Pancreas (tissue), 10 donors: ENCODE measurements at regions of chr2 and their contacts with region 1.

Region 1: GRCh38 chr2:180125245-180125962 is 118.3 kb upstream of the CWC22 start:
- DNase-seq: peak in 4 of 6 donors; percentile 22 to 50 (median 31)
- ATAC-seq: peak; percentile 87 to 96 (median 93)
- H3K4me3 ChIP-seq: no peak overlapping the region
- H3K27ac ChIP-seq: no peak overlapping the region
- H3K4me1 ChIP-seq: no peaks in the 10 kb centered on the region
- H3K27me3 ChIP-seq: no peaks in the 10 kb centered on the region
- CTCF ChIP-seq: peak in 2 of 4 donors; percentile 34 to 41

Region 2: DNA sequence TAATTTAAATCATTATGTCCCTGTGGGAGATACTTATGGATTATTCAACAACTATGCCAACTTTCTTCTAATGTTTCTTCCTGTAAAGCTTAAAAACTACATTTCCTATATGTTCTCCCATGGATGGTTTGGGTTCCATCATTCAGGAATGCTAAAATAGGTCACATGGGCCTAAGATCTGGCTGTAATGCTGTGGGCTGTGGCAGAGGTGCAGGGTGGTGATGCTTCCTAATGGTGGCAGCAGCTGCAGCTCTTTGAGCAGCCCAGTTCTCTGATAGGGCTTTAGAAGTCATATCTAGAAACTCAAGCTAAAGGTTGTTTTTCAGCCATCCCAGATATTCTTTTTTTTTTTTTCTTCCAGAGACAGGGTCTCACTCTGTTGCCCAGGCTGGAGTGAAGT is 530.1 kb before region 1 on chr2:
- intact Hi-C with region 1: no loop called
- DNase-seq: no peak
- ATAC-seq: peak in 1 of 4 donors; percentile 21
- H3K4me3 ChIP-seq: no peak overlapping the region
- H3K27ac ChIP-seq: no peak overlapping the region
- H3K4me1 ChIP-seq: no peaks in the 10 kb centered on the region
- H3K27me3 ChIP-seq: no peaks in the 10 kb centered on the region
- CTCF ChIP-seq: no peak

Region 3: DNA sequence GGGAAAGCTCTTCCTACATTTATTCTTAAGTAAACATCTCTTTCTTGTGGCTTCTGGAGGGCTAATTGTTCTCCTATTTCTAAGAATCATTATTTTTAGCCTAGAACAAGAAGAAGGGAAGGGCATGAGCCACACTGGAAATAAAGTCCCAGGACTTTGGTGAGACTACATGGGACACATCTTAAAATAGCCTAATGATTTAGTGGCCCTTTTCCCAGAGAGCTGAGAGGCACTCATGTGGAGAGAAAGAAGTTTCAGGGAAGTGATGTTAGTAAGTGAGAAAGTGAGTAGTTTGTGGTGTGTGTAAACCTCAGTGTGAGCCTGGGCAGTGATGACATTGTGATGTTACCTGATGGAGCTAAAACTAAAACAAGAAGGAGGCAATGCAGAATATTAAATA is 1346.4 kb after region 1 on chr2:
- intact Hi-C with region 1: loop called in 1 of 3 experiments (anchors 10 kb)
- DNase-seq: no peak
- ATAC-seq: no peak
- H3K4me3 ChIP-seq: no peak overlapping the region
- H3K27ac ChIP-seq: no peak overlapping the region
- H3K4me1 ChIP-seq: no peaks in the 10 kb centered on the region
- H3K27me3 ChIP-seq: no peaks in the 10 kb centered on the region
- CTCF ChIP-seq: no peak